Aorta (tissue), 5 donors: ENCODE measurements at regions of chr22 and their contacts with region 1.

Region 1: GRCh38 chr22:32796865-32797573 is 4.5 kb upstream of the TIMP3 start:
- DNase-seq: peak; percentile 76 to 89
- ATAC-seq: peak; percentile 77
- H3K4me3 ChIP-seq: no peak overlapping the region
- H3K27ac ChIP-seq: no peak overlapping the region
- H3K4me1 ChIP-seq: no peaks in the 10 kb centered on the region
- H3K27me3 ChIP-seq: no peaks in the 10 kb centered on the region

Region 2: GRCh38 chr22:32528984-32529982 is 267.7 kb before region 1 on chr22:
- intact Hi-C with region 1: loop called (anchors 2 kb)
- DNase-seq: peak; percentile 89 to 91
- ATAC-seq: peak; percentile 89
- H3K4me3 ChIP-seq: no peak overlapping the region
- H3K27ac ChIP-seq: no peak overlapping the region
- H3K4me1 ChIP-seq: no peaks in the 10 kb centered on the region
- H3K27me3 ChIP-seq: no peaks in the 10 kb centered on the region

Region 3: GRCh38 chr22:32660292-32660691 is 136.7 kb before region 1 on chr22:
- intact Hi-C with region 1: loop called (anchors 1 to 2 kb)
- DNase-seq: peak; percentile 76 to 83
- ATAC-seq: peak; percentile 77
- H3K4me3 ChIP-seq: no peak overlapping the region
- H3K27ac ChIP-seq: no peak overlapping the region
- H3K4me1 ChIP-seq: no peaks in the 10 kb centered on the region
- H3K27me3 ChIP-seq: no peaks in the 10 kb centered on the region

Region 4: GRCh38 chr22:32723643-32724042 is 73.4 kb before region 1 on chr22:
- intact Hi-C with region 1: loop called in 1 of 2 experiments (anchors 2 kb)
- DNase-seq: peak; percentile 87 to 94
- ATAC-seq: peak; percentile 78
- H3K4me3 ChIP-seq: no peak overlapping the region
- H3K27ac ChIP-seq: peak overlapping the region in 1 of 2 donors; percentile 74
- H3K4me1 ChIP-seq: peaks cover 0 to 1% of the 10 kb centered on the region in 2 donors
- H3K27me3 ChIP-seq: no peaks in the 10 kb centered on the region

Region 5: DNA sequence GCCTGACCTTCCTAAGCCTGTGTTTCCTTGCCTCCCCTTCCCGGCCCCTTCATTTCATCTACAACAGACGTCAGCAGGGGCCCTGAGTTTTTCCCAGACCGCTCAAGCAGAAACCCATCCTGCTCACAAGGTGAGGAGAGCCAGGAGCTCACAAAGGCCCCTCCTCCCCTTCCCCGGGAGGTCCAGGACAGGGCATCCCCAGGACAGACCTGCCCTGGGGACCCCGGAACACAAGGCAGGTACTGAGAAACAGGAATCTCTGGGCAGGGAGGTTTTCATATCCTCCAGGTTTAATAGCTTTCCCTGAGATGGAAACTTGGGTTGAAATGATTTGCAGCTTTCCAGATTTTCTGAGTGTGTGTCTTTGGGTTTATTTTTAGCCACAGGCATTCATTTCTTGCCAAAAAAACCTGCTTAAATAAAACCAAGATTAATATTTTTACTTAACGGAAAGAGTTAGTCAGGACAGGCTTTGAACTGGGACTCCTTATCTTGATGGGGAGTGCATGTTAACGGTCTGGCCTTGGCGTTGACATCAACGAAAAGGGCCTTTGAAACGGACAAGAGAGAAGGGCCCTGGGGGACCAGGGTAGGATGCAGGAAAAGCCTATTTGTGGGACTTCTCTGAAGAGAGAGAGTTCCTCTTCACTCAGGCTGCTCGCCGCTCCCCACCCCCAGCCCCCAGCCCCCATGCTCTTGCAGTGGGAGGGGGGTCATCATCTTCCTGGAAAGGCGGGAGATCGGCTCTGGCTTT is 43.0 kb after region 1 on chr22:
- intact Hi-C with region 1: no loop called
- DNase-seq: no peak
- ATAC-seq: peak; percentile 53
- H3K4me3 ChIP-seq: no peak overlapping the region
- H3K27ac ChIP-seq: peak overlapping the region; percentile 83 to 94
- H3K4me1 ChIP-seq: peaks cover 0 to 11% of the 10 kb centered on the region in 2 donors
- H3K27me3 ChIP-seq: no peaks in the 10 kb centered on the region

Region 6: DNA sequence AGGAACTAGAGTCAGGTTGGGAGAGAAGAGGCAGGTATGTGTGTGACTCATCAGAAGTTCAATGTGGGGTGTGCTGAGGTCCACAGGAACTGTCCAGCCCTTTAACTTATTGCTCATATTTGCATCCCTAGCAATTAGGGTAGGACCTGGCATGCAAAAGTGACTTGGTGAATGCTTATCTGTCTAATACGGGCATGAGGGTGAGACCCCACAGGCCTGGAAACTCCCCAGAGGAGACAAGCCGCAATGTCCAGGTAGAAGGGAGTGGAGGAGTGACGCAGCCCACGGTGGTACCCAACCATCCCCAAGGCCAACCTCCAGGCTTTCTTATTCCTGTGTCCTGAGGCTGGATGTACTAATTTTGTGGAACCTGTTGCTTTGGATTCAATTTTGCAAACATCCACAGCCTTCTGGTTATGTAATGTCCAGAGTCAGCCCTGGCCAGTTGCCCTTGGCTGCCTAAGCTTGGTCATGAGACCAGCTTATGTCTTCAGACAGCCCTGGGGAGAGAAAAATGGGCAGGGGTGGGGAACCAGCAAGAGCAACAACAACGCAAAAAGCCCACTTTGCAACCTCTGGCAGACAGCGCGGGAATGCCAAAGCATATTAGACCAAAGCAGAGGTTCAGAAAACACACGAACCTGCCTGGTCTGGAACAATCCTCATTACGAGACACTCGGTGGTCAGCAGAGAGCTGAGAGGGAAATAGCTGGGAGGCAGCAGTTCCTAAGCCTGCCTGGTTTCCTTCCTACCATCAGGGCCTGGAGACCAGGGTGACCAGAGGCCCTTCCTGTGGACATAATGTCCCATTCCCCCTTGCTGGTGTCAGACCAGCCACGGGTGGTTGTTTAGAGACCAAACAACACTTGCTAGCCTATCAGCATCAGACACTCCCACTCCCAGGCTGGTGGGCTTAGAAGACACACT is 53.8 kb after region 1 on chr22:
- intact Hi-C with region 1: loop called in 1 of 2 experiments (anchors 5 kb)
- DNase-seq: peak; percentile 89 to 90
- ATAC-seq: peak; percentile 81
- H3K4me3 ChIP-seq: no peak overlapping the region
- H3K27ac ChIP-seq: peak overlapping the region; percentile 68 to 73
- H3K4me1 ChIP-seq: peaks cover 3 to 11% of the 10 kb centered on the region in 2 donors
- H3K27me3 ChIP-seq: no peaks in the 10 kb centered on the region

Region 7: DNA sequence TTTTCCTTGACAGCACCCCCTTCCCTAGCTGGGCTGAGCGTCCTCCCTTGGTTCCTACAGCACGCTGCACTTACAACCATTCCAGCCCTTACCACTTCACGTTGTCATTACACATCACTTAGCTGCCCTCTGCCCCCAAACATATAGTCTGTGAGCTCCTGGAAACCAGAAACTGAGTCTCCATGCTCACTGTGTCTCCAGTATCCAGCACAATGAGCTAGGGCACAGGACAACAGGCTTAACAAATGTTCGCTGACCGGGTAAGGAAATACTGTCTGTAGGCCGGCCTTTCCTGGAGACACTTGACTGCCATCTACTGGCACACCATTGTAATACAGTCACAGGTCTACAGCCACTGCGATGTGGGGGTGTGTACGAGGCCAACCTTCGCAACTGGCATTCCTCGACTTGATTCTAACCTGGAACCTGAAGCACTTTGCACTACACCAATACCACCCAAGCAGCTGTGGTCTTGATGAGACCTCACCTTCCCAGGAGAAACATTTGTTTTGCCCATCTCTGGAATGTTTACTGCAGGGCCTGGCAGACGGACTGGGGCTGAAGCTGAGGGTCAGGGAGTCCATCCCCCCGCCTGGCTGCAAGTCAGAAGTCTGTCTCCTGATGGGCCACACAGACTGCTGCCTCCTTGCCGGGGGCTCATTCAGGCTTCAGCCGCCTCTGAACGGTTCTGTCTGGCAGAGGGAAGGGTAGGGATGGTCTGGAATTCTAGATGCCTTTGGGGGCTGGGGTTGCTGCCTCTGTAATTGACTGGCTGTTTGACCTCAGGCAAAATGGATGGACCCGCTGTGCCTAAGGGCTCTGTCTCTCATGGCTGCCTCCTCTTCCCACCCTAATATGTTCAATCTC is 189.1 kb after region 1 on chr22:
- intact Hi-C with region 1: loop called (anchors 2 to 5 kb)
- DNase-seq: peak in 1 of 2 donors; percentile 69
- ATAC-seq: peak; percentile 95
- H3K4me3 ChIP-seq: no peak overlapping the region
- H3K27ac ChIP-seq: no peak overlapping the region
- H3K4me1 ChIP-seq: no peaks in the 10 kb centered on the region
- H3K27me3 ChIP-seq: no peaks in the 10 kb centered on the region

Region 8: DNA sequence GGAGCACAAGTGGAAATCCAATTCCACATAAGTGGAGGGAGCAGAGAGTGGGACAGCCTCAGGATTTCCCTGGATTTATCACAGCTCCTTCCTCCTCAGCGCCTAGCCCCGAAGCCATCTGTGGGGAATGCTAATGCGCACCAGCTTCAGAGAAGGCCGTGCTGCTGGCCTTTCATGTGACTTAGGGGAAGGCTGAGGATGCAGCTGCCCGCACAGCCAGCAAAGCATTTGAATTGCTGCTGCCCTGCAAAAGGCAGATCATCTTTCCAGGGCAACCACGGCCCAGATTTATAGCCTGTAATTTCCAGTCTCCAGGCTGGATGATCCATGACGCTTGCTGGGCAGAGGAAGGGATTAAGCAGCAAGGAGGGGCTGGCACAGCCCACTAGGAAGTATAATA is 231.2 kb after region 1 on chr22:
- intact Hi-C with region 1: no loop called
- DNase-seq: no peak
- ATAC-seq: no peak
- H3K4me3 ChIP-seq: no peak overlapping the region
- H3K27ac ChIP-seq: no peak overlapping the region
- H3K4me1 ChIP-seq: no peaks in the 10 kb centered on the region
- H3K27me3 ChIP-seq: peaks cover 0 to 2% of the 10 kb centered on the region in 2 donors

Region 9: GRCh38 chr22:33896575-33897447 is 1099.8 kb after region 1 on chr22:
- intact Hi-C with region 1: no loop called
- DNase-seq: no peak
- ATAC-seq: no peak
- H3K4me3 ChIP-seq: no peak overlapping the region
- H3K27ac ChIP-seq: no peak overlapping the region
- H3K4me1 ChIP-seq: no peaks in the 10 kb centered on the region
- H3K27me3 ChIP-seq: no peaks in the 10 kb centered on the region